ENCODE measurements at regions of chrX and their contacts with region 1.

Region 1: DNA sequence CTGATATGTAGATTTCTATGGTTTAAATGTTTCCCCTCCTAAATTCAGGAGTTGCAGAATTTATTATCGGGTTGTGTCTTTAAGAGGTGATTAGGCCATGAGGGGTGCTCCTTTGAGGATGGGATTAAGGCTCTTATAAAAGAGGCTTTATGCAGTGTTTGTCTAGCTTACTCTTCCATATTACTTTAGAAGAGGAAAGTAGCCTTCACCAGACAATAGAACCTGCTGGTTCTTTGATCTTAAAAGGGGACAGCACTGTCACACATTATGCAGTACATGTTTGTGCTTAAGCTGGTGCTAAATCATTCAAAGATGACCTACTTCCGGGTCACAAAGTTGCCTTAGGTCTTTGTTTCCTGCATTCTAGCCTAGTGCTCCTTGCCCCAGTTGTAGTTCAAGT is 81.0 kb downstream of the CPXCR1 start:
- DNase-seq: no peak
- CTCF ChIP-seq: no peak

Region 2: GRCh38 chrX:88903989-88904718 is 76.1 kb after region 1 on chrX:
- in situ Hi-C with region 1: loop called (anchors 25 kb)
- DNase-seq: no peak
- CTCF ChIP-seq: no peak

Measured in GM13976 (cell line).